ENCODE measurements at regions of chr11 and their contacts with region 1.

Region 1: GRCh38 chr11:61061081-61061826 is 41.0 kb upstream of the CD5 start:
- DNase-seq: peak; percentile 97
- H3K4me3 Mint-ChIP-seq: peak overlapping the region; percentile 70
- H3K27ac Mint-ChIP-seq: peak overlapping the region; percentile 100
- H3K4me1 Mint-ChIP-seq: peaks cover 88% of the 10 kb centered on the region
- H3K27me3 Mint-ChIP-seq: no peaks in the 10 kb centered on the region

Region 2: GRCh38 chr11:60913793-60914632 is 147.2 kb before region 1 on chr11 and contains the start of gene TMEM109:
- CTCF ChIA-PET with region 1: no interaction called
- intact Hi-C with region 1: loop called (anchors 1 kb)
- DNase-seq: peak; percentile 89
- H3K4me3 Mint-ChIP-seq: peak within 1 kb of the TSS; percentile 94
- H3K27ac Mint-ChIP-seq: peak within 1 kb of the TSS; percentile 95
- H3K4me1 Mint-ChIP-seq: peaks cover 62% of the 10 kb centered on the region
- H3K27me3 Mint-ChIP-seq: no peaks in the 10 kb centered on the region
- total RNA-seq, gene TMEM109: 94.0 to 103 TPM

Region 3: DNA sequence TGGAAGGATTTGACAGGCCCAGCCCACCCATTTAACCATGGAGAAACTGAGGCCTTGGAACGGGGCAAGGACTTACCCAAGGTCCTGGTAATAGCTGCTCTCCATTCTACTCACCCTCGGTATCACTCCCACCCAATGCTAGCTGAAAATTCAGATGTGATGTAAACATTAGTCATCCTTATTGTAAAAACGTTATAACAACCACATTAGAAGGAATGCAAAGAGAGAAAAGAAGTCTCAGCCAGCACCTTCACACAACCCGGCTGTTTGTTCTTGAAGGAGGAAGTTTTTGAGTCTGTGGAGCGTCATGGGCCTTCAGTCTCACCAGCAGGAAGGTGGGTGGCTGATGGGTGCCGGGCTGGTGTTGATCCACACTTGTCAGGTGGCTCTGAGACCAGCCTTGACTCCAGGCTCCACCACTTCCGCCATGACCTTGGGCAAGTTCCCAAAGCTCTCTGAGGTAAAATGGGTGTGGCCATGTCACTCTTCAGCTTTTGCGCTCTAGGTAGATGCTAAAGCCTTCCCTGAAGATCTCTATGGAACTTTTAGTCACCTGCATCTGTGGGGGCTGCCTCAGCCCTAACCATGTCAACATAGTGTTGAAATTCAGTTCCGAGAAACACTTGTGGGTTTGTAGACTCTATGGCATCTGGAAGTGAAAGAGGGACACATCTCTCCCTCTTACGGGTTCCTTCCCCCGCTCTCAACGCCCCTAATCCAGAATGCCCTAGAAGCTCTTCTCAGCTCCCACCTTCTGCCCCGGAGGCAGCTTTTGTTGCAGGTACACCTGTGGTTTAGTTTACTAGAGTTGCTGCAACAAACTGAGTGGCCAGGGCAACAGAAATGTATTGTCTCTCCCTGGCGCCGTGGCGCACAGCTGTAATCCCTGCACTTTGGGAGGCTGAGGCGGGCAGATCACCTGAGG is 75.0 kb before region 1 on chr11:
- CTCF ChIA-PET with region 1: interaction called, 4 read pairs
- intact Hi-C with region 1: loop called (anchors 1 kb)
- DNase-seq: peak; percentile 97
- H3K4me3 Mint-ChIP-seq: peak overlapping the region; percentile 77
- H3K27ac Mint-ChIP-seq: peak overlapping the region; percentile 97
- H3K4me1 Mint-ChIP-seq: peaks cover 90% of the 10 kb centered on the region
- H3K27me3 Mint-ChIP-seq: no peaks in the 10 kb centered on the region

Region 4: GRCh38 chr11:61028272-61028761 is 32.9 kb before region 1 on chr11:
- CTCF ChIA-PET with region 1: interaction called, 6 read pairs
- intact Hi-C with region 1: loop called (anchors 1 kb)
- DNase-seq: peak; percentile 93
- H3K4me3 Mint-ChIP-seq: peak overlapping the region; percentile 87
- H3K27ac Mint-ChIP-seq: peak overlapping the region; percentile 100
- H3K4me1 Mint-ChIP-seq: peaks cover 82% of the 10 kb centered on the region
- H3K27me3 Mint-ChIP-seq: no peaks in the 10 kb centered on the region

Region 5: GRCh38 chr11:61077936-61078335 is 16.7 kb after region 1 on chr11:
- CTCF ChIA-PET with region 1: interaction called, 21 read pairs
- intact Hi-C with region 1: loop called (anchors 1 kb)
- DNase-seq: no peak
- H3K4me3 Mint-ChIP-seq: peak overlapping the region; percentile 26
- H3K27ac Mint-ChIP-seq: peak overlapping the region; percentile 99
- H3K4me1 Mint-ChIP-seq: peaks cover 87% of the 10 kb centered on the region
- H3K27me3 Mint-ChIP-seq: no peaks in the 10 kb centered on the region

Region 6: DNA sequence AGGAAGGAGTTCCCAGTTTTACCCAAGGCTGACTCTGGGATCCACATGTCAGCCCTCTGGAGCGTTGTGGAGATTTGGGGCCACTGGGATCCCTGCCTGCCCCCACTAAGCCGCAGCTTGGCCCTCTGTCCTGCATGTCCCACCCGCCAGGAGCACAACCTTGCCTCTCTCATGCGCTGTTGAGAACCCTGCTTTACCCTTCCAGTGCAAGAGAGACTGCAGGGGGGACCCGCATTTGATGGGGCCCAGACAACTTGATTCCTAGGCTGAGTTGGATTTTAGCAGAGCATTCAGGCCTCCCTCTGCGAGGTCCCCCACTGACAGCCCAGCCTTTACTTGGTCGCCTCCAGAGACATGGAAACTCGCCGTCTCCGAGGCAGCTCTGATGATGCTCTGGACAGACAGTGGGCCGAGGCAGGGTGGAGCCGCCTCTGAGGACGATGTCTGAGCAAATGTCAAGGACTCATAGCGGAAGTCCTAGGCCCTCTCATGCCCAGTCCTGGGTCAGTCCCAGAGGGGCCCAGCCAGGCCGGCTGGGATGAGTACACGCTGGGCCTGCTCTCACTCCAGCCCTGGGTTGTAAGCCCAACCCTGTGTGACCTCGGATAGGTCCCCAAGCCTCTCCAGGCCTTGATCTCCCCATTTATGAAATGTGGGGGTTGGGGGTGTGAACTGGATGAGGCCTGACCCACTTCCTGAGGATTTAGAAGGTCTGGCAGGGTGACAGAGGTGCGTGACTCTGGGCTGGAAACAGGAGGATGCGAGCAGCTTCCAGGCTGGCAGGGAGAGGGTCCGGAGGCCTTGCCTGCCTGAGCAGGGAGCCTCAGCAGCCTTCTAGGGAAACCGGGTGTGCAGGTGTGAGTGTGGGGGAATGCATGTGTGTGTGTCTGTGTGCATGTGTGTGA is 41.7 kb after region 1 on chr11:
- CTCF ChIA-PET with region 1: interaction called, 3 read pairs
- intact Hi-C with region 1: loop called (anchors 1 kb)
- DNase-seq: peak; percentile 67
- H3K4me3 Mint-ChIP-seq: no peak overlapping the region
- H3K27ac Mint-ChIP-seq: no peak overlapping the region
- H3K4me1 Mint-ChIP-seq: peaks cover 31% of the 10 kb centered on the region
- H3K27me3 Mint-ChIP-seq: no peaks in the 10 kb centered on the region

Region 7: DNA sequence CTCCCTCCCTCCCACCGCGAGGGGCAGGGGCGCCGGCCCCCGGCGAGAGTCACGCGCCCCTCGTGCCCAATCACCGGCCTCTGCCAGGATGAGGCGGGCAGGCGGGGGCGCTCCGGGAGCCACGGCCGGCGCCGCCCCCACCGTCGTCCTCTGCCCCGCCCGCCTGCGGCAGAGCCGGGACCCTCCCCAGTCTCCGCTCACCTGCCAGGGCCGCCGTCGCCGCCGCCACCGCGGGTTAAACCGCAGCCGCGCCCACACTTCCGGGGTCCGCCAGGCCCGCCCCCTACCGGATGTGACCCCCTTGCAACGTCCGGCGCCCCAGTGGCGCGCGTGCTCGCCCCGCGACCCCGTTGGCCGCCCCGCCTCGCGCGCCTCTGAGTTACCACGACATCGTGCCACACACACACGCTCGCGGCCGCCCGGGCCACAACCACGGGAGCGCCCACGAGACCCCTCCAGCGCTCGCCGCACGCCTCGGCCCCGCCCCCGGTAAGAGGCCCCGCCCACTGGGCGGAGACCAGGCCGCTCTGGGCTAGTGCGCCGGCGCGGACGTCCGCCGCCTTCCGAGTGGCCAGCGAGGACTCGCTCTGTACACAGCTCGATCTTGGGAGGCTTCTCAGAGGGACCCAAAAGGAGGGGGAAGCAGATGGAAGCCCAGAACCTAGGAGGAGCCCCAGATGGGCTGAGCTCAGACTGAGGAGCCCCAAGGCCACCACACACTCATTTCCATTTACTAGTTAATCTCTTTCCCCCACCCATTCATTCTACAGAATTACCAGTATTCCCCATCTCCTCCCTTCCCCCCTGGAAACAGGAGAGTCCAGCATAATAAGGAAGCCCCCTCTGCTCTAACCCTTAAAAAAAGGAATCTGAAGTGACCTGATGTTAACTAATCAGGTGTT is 100.2 kb after region 1 on chr11 and contains the start of gene VPS37C:
- CTCF ChIA-PET with region 1: no interaction called
- intact Hi-C with region 1: loop called (anchors 5 kb)
- DNase-seq: peak; percentile 91
- H3K4me3 Mint-ChIP-seq: peak within 1 kb of the TSS; percentile 94
- H3K27ac Mint-ChIP-seq: peak within 1 kb of the TSS; percentile 93
- H3K4me1 Mint-ChIP-seq: peaks cover 62% of the 10 kb centered on the region
- H3K27me3 Mint-ChIP-seq: no peaks in the 10 kb centered on the region
- total RNA-seq, gene VPS37C: 8.5 to 8.9 TPM

Measured in activated naive CD4-positive, alpha-beta T cell treated with anti-CD3 and anti-CD28 coated beads for 36 hours (primary cell).